ENCODE measurements at regions of chr17 and their contacts with region 1.

Region 1: DNA sequence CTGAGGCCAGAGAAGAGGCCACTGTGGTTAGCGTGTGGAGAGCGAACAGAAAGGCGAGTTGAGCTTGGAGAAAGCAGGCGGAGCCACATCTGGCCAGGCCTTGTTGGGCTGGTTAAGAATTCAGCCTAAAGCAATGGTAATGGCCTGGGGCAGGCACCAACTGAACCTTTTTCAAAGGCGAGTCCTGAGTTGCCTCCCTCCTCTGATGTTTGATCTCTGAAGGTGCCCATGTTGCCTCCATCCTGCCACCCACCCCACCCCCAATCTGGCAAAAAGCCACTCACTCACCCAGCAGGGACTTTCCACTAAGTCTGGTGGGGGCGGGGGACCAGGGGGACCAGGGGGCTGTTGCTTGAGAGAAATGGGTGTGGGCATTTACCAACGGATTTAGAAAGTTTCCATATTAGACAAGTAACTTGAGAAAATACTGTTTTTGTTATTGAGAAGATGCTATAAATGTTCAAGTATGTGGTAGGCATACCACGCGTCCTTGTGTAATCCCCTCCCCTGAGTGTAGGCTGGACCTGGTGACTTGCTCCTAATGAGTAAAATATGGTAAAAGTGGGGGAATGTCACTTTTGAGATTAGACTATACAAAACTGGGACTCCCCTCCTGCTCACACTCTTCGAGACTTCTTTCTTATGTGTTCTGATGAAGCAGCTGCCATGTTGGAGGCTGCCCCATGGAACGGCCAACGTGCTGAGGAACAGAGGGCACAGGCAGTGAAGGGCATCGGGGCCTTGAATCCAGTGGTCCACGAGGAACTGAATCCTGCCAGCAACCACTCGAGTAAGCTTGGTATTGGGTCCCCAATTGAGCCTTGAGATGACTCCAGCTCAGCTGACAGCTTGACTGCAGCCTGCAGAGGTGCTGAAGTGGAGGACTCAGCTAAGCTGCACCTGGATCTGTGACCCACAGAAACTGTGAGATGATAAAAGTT is 29.9 kb upstream of the TNS4 start:
- DNase-seq: peak; percentile 95
- H3K4me3 Mint-ChIP-seq: peak overlapping the region; percentile 61
- H3K27ac Mint-ChIP-seq: peak overlapping the region; percentile 91
- H3K4me1 Mint-ChIP-seq: peaks cover 72% of the 10 kb centered on the region
- H3K27me3 Mint-ChIP-seq: no peaks in the 10 kb centered on the region

Region 2: DNA sequence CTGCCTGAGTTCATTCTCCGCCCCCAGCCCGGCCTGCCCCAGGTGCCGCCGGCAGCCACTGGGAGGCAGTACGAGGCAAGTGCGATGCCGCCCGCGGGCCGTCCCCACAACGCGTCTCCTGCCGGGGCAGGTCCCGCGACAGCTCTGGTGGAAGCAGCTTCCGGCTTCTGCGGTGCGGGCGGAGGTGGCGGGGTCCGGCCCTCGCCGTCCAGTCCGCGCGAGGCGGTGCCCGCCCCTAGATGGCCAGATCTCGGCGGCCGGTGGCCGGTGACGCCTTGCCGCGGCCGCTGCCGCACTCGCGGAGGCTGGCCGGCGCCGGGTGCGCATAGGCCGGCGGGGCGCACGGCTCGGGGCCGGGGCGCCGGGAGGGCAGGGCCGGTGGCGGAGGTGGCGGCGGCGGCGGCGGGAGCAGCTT is 168.6 kb before region 1 on chr17:
- CTCF ChIA-PET with region 1: interaction called, 82 read pairs
- intact Hi-C with region 1: loop called (anchors 1 kb)
- DNase-seq: peak; percentile 95
- H3K4me3 Mint-ChIP-seq: peak overlapping the region; percentile 76
- H3K27ac Mint-ChIP-seq: no peak overlapping the region
- H3K4me1 Mint-ChIP-seq: peaks cover 12% of the 10 kb centered on the region
- H3K27me3 Mint-ChIP-seq: peaks cover 12% of the 10 kb centered on the region

Region 3: GRCh38 chr17:40417609-40418427 is 113.5 kb before region 1 on chr17 and contains the start of gene TOP2A:
- CTCF ChIA-PET with region 1: interaction called, 81 read pairs
- intact Hi-C with region 1: loop called (anchors 1 kb)
- DNase-seq: peak; percentile 99
- H3K4me3 Mint-ChIP-seq: peak within 1 kb of the TSS; percentile 98
- H3K27ac Mint-ChIP-seq: peak within 1 kb of the TSS; percentile 90
- H3K4me1 Mint-ChIP-seq: peaks cover 26% of the 10 kb centered on the region
- H3K27me3 Mint-ChIP-seq: peaks cover 2% of the 10 kb centered on the region
- total RNA-seq, gene TOP2A: 410 to 416 TPM

Region 4: DNA sequence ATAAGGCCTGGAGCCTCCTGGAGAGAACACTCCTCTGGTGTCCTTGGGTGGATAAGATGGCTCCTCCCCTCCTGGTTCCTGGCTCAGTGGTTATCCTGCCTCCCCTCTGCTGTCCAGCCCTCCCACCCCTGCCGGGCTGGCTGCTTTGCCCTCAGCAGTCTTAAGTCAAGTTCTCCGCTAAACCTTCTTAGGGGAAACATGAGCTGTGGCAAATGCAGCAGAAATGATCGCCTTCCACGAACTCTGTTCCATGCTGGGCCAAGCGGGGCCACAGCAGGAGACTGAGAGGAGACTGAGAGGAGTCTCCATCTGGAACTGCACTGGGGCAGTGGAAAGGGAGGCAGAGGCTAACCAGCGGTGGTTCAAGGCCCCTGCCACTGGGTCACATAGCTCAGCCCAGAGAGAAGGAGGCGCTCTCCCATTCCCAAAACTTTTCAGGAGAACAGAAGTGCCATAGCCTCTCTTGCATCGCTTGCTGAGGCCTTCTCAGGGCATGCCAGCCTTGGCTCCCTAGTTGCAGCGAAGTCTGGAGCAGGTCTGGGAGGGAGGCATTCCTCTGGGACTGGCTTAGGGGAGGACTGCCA is 56.8 kb before region 1 on chr17:
- CTCF ChIA-PET with region 1: interaction called, 112 read pairs
- intact Hi-C with region 1: no loop called
- DNase-seq: no peak
- H3K4me3 Mint-ChIP-seq: no peak overlapping the region
- H3K27ac Mint-ChIP-seq: no peak overlapping the region
- H3K4me1 Mint-ChIP-seq: peaks cover 11% of the 10 kb centered on the region
- H3K27me3 Mint-ChIP-seq: no peaks in the 10 kb centered on the region

Region 5: GRCh38 chr17:40516581-40517285 is 14.6 kb before region 1 on chr17:
- CTCF ChIA-PET with region 1: interaction called, 32 read pairs
- intact Hi-C with region 1: loop called (anchors 1 kb)
- DNase-seq: peak; percentile 88
- H3K4me3 Mint-ChIP-seq: peak overlapping the region; percentile 64
- H3K27ac Mint-ChIP-seq: peak overlapping the region; percentile 82
- H3K4me1 Mint-ChIP-seq: peaks cover 48% of the 10 kb centered on the region
- H3K27me3 Mint-ChIP-seq: peaks cover 3% of the 10 kb centered on the region

Region 6: DNA sequence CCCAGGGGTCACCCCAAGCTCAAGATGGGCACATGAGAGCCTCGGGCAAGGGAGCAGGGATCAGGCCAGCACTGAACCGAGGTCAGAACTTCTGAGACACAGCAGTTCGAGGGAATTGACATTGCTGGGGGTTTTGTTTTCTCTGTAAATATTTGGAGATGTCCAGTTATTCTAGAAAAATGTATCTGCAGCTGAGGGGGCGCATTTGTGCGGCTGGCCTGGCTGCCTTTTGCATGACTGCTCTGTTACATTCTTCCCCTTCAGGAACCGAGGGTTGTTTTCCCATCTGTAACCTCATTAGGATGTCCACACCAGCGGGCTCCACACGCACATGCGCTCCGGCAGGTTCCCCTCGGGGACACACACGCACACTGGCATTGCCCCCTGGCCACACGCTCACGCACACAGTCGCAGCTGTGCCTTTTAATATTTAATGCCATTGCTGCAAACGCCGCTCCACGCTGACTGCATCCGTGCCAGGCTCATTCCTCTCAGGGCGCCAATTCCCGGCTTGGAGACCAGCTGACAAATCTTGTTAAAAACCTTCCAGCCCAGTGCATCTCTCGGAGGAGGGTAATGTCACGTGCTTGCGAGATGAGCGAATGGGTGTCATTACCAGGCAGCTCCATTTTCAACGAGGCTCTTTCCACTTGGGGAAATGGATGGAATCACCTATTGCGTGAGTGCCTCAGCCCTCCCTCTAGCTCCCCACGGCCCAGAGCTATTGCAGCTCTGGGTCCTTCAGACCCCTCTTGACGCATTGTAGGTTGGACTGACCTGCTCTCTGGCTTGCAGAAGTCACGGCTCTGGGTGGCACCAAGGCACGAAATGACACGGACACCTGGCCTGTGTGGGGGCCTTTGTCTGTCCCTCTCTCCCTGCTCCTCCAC is 20.8 kb after region 1 on chr17:
- CTCF ChIA-PET with region 1: interaction called, 276 read pairs
- intact Hi-C with region 1: no loop called
- DNase-seq: peak; percentile 32
- H3K4me3 Mint-ChIP-seq: peak overlapping the region; percentile 35
- H3K27ac Mint-ChIP-seq: peak overlapping the region; percentile 89
- H3K4me1 Mint-ChIP-seq: peaks cover 100% of the 10 kb centered on the region
- H3K27me3 Mint-ChIP-seq: no peaks in the 10 kb centered on the region